Dendritic cell treated with granulocyte-macrophage colony-stimulating factor and Interleukin-4, amounts not matched to agents 40 ng/mL and 50 ng/mL, for 4 days (primary cell): ENCODE measurements at regions of chr3 and their contacts with region 1.

Region 1: GRCh38 chr3:169658311-169658931 is 5.1 kb downstream of the MECOM start:
- H3K4me3 Mint-ChIP-seq: no peak overlapping the region
- H3K27ac Mint-ChIP-seq: no peak overlapping the region
- H3K4me1 Mint-ChIP-seq: peaks cover 49% of the 10 kb centered on the region
- H3K27me3 Mint-ChIP-seq: peaks cover 80% of the 10 kb centered on the region

Region 2: GRCh38 chr3:169323578-169324451 is 334.6 kb before region 1 on chr3:
- intact Hi-C with region 1: no loop called
- H3K4me3 Mint-ChIP-seq: peak overlapping the region; percentile 9
- H3K27ac Mint-ChIP-seq: no peak overlapping the region
- H3K4me1 Mint-ChIP-seq: peaks cover 17% of the 10 kb centered on the region
- H3K27me3 Mint-ChIP-seq: peaks cover 2% of the 10 kb centered on the region

Region 3: DNA sequence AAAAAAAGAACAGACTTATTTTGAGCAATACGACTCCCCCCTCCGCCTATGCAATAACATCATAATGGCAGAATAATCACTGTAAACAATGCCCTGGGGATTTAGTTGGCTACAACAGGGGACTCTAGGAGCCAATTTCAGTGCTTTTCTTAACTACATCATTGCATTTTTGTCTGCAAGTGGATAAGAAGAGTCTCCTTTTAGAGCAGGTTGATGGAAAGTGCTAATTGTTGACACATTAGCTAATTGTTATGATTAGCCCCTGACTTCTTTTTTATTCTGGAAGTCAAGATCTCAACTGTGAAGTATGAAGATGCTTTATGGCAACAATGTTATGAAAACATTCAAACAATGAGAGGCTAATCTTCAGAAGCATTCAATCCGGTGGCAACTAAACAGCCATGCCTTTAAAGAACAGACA is 116.1 kb before region 1 on chr3:
- intact Hi-C with region 1: no loop called
- H3K4me3 Mint-ChIP-seq: no peak overlapping the region
- H3K27ac Mint-ChIP-seq: no peak overlapping the region
- H3K4me1 Mint-ChIP-seq: no peaks in the 10 kb centered on the region
- H3K27me3 Mint-ChIP-seq: no peaks in the 10 kb centered on the region

Region 4: GRCh38 chr3:169699536-169700050 is 41.2 kb after region 1 on chr3:
- intact Hi-C with region 1: no loop called
- H3K4me3 Mint-ChIP-seq: no peak overlapping the region
- H3K27ac Mint-ChIP-seq: no peak overlapping the region
- H3K4me1 Mint-ChIP-seq: no peaks in the 10 kb centered on the region
- H3K27me3 Mint-ChIP-seq: peaks cover 6% of the 10 kb centered on the region

Region 5: DNA sequence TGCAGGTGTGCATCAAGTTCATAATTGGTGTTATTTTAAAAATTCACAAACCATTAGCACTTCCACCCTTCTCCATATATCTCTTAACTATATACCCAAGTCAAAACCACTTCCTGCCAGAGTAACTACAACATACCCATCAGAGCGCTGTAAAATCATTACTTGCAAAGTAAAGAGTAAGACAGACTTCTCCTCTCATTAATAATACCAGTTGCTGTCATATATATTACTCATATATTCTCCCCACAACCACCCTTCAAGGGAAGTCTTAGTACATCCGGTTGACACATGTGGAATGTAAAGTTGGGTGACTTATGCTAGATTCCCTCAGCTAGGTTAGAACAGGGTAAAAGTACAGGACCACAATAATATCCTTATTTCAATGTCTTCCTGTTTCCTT is 100.8 kb after region 1 on chr3:
- intact Hi-C with region 1: loop called (anchors 10 kb)
- H3K4me3 Mint-ChIP-seq: no peak overlapping the region
- H3K27ac Mint-ChIP-seq: no peak overlapping the region
- H3K4me1 Mint-ChIP-seq: peaks cover 10% of the 10 kb centered on the region
- H3K27me3 Mint-ChIP-seq: peaks cover 11% of the 10 kb centered on the region